ACHN (cell line): ENCODE measurements at regions of chr2 and their contacts with region 1.

Region 1: GRCh38 chr2:234550511-234551107 is 53.7 kb upstream of the ARL4C start:
- DNase-seq: peak; percentile 77

Region 2: GRCh38 chr2:234446404-234447076 is 104.1 kb before region 1 on chr2:
- in situ Hi-C with region 1: no loop called
- DNase-seq: no peak

Region 3: GRCh38 chr2:234881413-234882241 is 331.0 kb after region 1 on chr2:
- in situ Hi-C with region 1: no loop called
- DNase-seq: peak; percentile 99

Region 4: DNA sequence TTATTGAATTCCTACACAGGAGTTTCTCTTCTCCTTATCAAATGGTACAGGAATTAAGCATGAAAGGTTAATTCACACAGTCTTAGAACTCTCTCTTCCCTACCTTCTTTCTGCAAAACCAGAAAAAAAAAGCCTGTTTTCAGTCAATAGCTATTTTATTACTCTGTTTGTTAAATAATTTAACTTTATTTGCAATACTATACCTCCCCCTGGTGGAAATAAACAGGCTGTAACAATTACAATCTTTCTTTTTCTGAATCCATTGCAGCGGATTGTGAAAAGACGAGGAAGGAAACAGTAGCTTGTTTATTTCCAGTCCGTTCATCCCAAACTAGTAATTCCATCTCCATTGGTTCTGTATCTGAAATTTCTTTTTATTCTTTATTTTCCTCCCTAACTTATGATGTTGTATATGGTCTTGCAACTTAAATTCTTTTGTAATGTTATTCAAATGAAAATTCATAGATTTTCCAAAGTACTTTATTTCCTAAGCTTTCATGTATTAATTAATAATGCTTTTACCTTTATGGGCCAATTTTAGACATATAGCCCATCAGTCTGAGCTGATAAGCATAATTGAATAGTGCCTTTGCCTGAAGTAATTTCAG is 566.4 kb after region 1 on chr2:
- in situ Hi-C with region 1: loop called (anchors 10 kb)
- DNase-seq: peak; percentile 72